Prostate gland (tissue), 2 donors: ENCODE measurements at regions of chr6 and their contacts with region 1.

Region 1: DNA sequence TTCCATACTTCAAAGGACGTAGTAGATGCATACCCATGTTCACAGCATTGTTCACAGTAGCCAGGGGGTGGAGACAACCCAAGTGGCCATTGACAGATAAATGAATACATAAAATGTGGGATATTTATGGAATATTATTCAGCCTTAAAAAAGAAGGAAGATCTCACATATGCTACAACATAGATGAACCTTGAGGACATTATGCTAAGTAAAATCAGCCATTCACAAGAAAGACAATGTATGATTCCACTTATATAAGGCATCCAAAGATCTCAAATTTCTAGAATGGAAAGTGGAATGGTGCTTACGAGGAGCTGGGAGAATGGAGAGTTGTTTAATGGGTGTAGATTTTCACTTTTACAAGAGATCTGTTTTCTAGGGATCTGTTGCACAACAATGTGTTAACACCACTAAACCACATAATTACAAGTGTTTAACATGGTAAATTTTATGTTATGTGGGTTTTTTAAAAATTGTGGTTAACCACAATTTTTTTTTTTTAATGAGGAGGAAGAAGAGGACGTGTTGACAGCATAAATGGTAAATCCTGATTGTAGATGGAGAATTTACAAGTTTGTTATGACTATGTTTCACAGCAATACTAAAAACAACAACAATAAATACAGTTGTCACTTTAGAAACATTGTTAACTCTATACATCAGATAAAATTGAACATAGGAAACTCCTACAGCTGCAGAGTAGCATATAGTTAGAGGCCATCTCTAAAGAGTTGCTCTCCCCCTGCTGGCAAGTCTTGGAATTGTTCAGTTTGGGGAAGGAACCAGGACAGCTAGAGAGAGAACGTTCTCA is 41.6 kb downstream of the CCN2 start:
- DNase-seq: peak; percentile 73
- H3K4me3 ChIP-seq: no peak overlapping the region
- H3K27ac ChIP-seq: no peak overlapping the region
- H3K4me1 ChIP-seq: no peaks in the 10 kb centered on the region
- H3K27me3 ChIP-seq: no peaks in the 10 kb centered on the region
- CTCF ChIP-seq: peak; percentile 49 to 83 (median 80)
- POLR2A ChIP-seq: no peak

Region 2: DNA sequence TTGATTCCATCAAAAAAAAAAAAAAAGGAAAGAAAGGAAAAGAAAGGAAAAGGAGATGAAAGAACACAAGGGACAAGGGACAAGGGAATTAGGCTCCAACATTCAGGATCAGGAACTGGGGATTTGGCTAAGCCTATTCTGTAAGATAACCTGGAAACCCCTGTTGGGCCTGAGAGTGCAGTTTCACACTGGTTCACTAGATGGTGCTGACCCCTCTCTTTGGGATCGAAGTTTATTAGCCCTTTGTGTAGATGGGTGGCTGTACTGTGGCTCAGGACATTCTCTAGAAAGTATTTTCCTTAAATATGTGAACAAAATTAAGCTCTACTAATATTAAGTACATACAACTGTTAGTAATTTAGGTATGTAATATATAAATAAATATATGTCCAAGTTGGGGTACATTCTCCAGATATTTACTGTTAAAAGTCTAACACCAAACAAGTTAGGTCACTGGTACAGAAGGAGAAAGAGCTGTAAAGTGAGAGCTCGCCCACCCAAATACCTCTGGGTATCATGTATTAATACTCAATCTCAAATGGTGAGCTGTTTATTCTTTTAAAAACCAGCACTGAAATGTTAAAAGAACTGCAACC is 214.7 kb before region 1 on chr6:
- intact Hi-C with region 1: loop called (anchors 2 kb)
- DNase-seq: peak; percentile 10
- H3K4me3 ChIP-seq: no peak overlapping the region
- H3K27ac ChIP-seq: no peak overlapping the region
- H3K4me1 ChIP-seq: no peaks in the 10 kb centered on the region
- H3K27me3 ChIP-seq: no peaks in the 10 kb centered on the region
- CTCF ChIP-seq: peak in 3 of 4 experiments; percentile 39 to 64 (median 59)
- POLR2A ChIP-seq: no peak

Region 3: GRCh38 chr6:131787766-131788712 is 121.6 kb before region 1 on chr6:
- intact Hi-C with region 1: loop called (anchors 10 kb)
- DNase-seq: no peak
- H3K4me3 ChIP-seq: no peak overlapping the region
- H3K27ac ChIP-seq: no peak overlapping the region
- H3K4me1 ChIP-seq: no peaks in the 10 kb centered on the region
- H3K27me3 ChIP-seq: no peaks in the 10 kb centered on the region
- CTCF ChIP-seq: no peak
- POLR2A ChIP-seq: no peak

Region 4: DNA sequence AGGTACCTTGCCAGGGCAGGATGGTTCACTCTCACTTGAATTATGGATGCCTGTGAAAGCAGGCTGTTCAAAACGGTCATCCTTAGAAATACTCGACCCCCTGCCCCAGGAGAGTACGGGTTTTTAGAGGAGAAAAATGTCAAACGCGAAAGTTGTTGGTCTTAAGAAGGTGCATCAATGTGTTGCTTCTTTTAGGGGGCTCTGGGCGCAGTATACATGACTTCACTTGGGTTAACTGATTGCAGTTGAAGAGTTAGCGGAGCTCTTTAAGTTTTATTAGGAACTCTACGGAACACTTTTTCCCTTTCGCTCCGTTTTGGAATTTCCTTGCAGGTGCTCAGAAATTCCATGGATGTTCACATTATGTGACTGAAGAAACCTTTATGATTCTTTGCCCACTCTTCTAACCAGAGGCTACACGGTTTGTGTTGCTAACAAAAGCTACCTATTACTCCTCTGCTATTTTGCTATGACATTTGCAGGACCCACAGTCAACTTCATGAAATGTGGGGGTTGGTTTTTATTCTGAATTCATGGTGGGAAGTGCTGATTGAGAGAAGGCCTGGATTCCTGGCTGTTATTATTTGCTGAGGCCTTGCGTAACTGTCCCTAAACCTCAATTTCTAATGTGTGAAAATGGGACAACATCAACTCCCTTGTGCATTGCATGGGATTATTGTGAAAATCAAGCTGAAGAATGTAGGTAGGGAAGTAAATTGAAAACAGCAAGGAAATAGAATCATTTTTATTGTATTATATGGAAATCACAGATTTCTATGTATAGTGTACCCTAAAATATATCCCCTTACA is 100.9 kb before region 1 on chr6:
- intact Hi-C with region 1: no loop called
- DNase-seq: no peak
- H3K4me3 ChIP-seq: peak overlapping the region; percentile 49 to 58
- H3K27ac ChIP-seq: peak overlapping the region; percentile 56 to 60
- H3K4me1 ChIP-seq: no peaks in the 10 kb centered on the region
- H3K27me3 ChIP-seq: no peaks in the 10 kb centered on the region
- CTCF ChIP-seq: no peak
- POLR2A ChIP-seq: no peak

Region 5: GRCh38 chr6:132483779-132484679 is 574.4 kb after region 1 on chr6:
- intact Hi-C with region 1: loop called (anchors 10 kb)
- DNase-seq: peak; percentile 43
- H3K4me3 ChIP-seq: no peak overlapping the region
- H3K27ac ChIP-seq: no peak overlapping the region
- H3K4me1 ChIP-seq: no peaks in the 10 kb centered on the region
- H3K27me3 ChIP-seq: no peaks in the 10 kb centered on the region
- CTCF ChIP-seq: peak; percentile 58 to 84 (median 74)
- POLR2A ChIP-seq: no peak